Activated CD4-positive, alpha-beta T cell treated with anti-CD3 and anti-CD28 coated beads for 36 hours (primary cell): ENCODE measurements at regions of chr3 and their contacts with region 1.

Region 1: GRCh38 chr3:197029511-197030167 is at the start of gene MELTF:
- DNase-seq: peak; percentile 84
- ATAC-seq: peak; percentile 84
- H3K4me3 Mint-ChIP-seq: peak within 1 kb of the TSS; percentile 72
- H3K27ac Mint-ChIP-seq: no peak within 1 kb of the TSS
- H3K4me1 Mint-ChIP-seq: peaks cover 18% of the 10 kb centered on the region
- H3K27me3 Mint-ChIP-seq: no peaks in the 10 kb centered on the region
- total RNA-seq, gene MELTF: 3.7 to 4.3 TPM

Region 2: GRCh38 chr3:196837819-196838420 is 191.7 kb before region 1 on chr3:
- CTCF ChIA-PET with region 1: interaction called, 12 read pairs
- POLR2A ChIA-PET with region 1: no interaction called
- intact Hi-C with region 1: no loop called
- DNase-seq: peak; percentile 87
- ATAC-seq: peak; percentile 94
- H3K4me3 Mint-ChIP-seq: no peak overlapping the region
- H3K27ac Mint-ChIP-seq: no peak overlapping the region
- H3K4me1 Mint-ChIP-seq: no peaks in the 10 kb centered on the region
- H3K27me3 Mint-ChIP-seq: no peaks in the 10 kb centered on the region

Region 3: DNA sequence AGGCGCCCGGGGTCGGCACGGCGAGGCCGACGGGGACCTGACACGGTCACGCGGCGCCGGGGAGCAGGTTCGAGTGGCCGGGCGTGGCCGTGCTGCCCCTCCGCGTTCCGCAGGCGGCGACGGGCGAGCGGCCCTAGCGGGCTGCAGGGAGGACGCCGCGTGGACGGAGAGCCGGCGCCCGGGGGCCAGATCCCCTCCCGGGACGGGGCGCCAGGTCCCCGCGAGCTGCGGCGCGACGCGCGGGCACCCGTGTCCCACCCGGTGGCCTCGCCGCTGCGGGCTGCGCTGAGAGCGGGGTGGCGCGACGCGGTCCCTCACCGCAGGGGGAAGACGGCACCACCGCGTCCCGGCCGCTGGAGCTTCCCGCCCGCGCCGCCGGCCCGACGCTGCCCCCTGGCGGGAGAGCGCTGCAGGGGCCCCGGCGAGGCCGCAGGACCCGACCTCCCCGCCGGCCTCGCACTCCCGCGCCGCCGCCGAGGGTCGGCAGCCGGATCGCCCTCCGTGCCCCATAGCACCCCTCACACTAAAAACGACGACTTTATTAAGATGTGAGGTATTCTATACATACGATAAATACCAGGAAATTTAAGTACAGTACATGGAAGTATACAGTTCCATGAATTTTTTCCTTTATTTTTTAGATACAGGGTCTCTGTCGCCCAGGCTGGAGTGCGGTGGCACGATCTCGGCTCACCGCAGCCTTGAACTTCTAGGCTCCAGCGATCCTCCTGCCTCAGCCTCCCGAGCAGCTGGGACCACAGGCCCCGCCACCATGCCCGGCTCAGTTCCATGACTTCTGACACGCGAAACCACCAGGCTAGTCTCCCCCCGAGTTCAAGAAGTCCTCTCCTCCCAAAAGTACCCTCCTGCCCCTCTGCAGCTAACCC is 59.7 kb before region 1 on chr3:
- CTCF ChIA-PET with region 1: no interaction called
- POLR2A ChIA-PET with region 1: no interaction called
- intact Hi-C with region 1: loop called in 1 of 2 experiments (anchors 2 kb)
- DNase-seq: peak; percentile 80
- ATAC-seq: peak; percentile 65
- H3K4me3 Mint-ChIP-seq: peak overlapping the region; percentile 63
- H3K27ac Mint-ChIP-seq: peak overlapping the region; percentile 31
- H3K4me1 Mint-ChIP-seq: peaks cover 15% of the 10 kb centered on the region
- H3K27me3 Mint-ChIP-seq: peaks cover 11% of the 10 kb centered on the region

Region 4: GRCh38 chr3:196979545-196979944 is 50.1 kb before region 1 on chr3:
- CTCF ChIA-PET with region 1: no interaction called
- POLR2A ChIA-PET with region 1: no interaction called
- intact Hi-C with region 1: loop called in 1 of 2 experiments (anchors 1 kb)
- DNase-seq: no peak
- ATAC-seq: no peak
- H3K4me3 Mint-ChIP-seq: no peak overlapping the region
- H3K27ac Mint-ChIP-seq: no peak overlapping the region
- H3K4me1 Mint-ChIP-seq: no peaks in the 10 kb centered on the region
- H3K27me3 Mint-ChIP-seq: no peaks in the 10 kb centered on the region

Region 5: GRCh38 chr3:197002701-197003454 is 26.8 kb before region 1 on chr3:
- CTCF ChIA-PET with region 1: interaction called, 29 read pairs
- POLR2A ChIA-PET with region 1: no interaction called
- intact Hi-C with region 1: loop called in 1 of 2 experiments (anchors 1 kb)
- DNase-seq: peak; percentile 90
- ATAC-seq: peak; percentile 81
- H3K4me3 Mint-ChIP-seq: peak overlapping the region; percentile 71
- H3K27ac Mint-ChIP-seq: no peak overlapping the region
- H3K4me1 Mint-ChIP-seq: peaks cover 9% of the 10 kb centered on the region
- H3K27me3 Mint-ChIP-seq: no peaks in the 10 kb centered on the region

Region 6: GRCh38 chr3:197103766-197104165 is 74.1 kb after region 1 on chr3:
- CTCF ChIA-PET with region 1: no interaction called
- POLR2A ChIA-PET with region 1: no interaction called
- intact Hi-C with region 1: no loop called
- DNase-seq: no peak
- ATAC-seq: no peak
- H3K4me3 Mint-ChIP-seq: no peak overlapping the region
- H3K27ac Mint-ChIP-seq: no peak overlapping the region
- H3K4me1 Mint-ChIP-seq: no peaks in the 10 kb centered on the region
- H3K27me3 Mint-ChIP-seq: no peaks in the 10 kb centered on the region

Region 7: GRCh38 chr3:197186887-197187588 is 157.4 kb after region 1 on chr3:
- CTCF ChIA-PET with region 1: interaction called, 3 read pairs
- POLR2A ChIA-PET with region 1: no interaction called
- intact Hi-C with region 1: loop called in 1 of 2 experiments (anchors 1 kb)
- DNase-seq: peak; percentile 16
- ATAC-seq: peak; percentile 73
- H3K4me3 Mint-ChIP-seq: no peak overlapping the region
- H3K27ac Mint-ChIP-seq: no peak overlapping the region
- H3K4me1 Mint-ChIP-seq: peaks cover 16% of the 10 kb centered on the region
- H3K27me3 Mint-ChIP-seq: no peaks in the 10 kb centered on the region